Aorta (tissue), 5 donors: ENCODE measurements at regions of chr12 and their contacts with region 1.

Region 1: DNA sequence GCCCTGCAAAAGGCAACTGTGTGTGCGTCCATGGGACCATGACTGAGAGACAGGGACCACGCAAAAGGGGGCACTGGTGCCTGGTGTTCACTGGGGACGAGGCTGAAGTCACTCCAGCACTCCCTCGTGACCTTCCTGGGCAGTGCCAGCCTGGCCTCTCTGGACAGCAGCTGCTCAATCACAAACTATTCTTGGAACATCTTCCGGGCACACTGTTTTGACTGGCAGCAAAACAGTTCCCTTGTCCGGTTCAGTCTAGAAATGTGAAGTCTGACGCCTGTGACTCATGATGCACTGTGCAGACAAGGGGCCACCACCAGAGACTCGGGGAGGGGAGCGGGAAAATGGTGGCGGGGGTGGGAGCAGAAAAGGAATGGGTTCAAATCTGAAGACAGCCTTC is 20.8 kb downstream of the SNRNP35 start:
- DNase-seq: peak; percentile 87 to 90
- ATAC-seq: peak; percentile 89
- H3K4me3 ChIP-seq: no peak overlapping the region
- H3K27ac ChIP-seq: peak overlapping the region; percentile 86 to 87
- H3K4me1 ChIP-seq: peaks cover 0 to 6% of the 10 kb centered on the region in 2 donors
- H3K27me3 ChIP-seq: no peaks in the 10 kb centered on the region

Region 2: GRCh38 chr12:123389560-123390351 is 89.0 kb before region 1 on chr12:
- intact Hi-C with region 1: loop called in 1 of 2 experiments (anchors 10 kb)
- DNase-seq: peak; percentile 65 to 83
- ATAC-seq: peak; percentile 59
- H3K4me3 ChIP-seq: peak overlapping the region; percentile 96 to 97
- H3K27ac ChIP-seq: peak overlapping the region; percentile 49 to 94
- H3K4me1 ChIP-seq: no peaks in the 10 kb centered on the region
- H3K27me3 ChIP-seq: no peaks in the 10 kb centered on the region

Region 3: GRCh38 chr12:123436017-123436964 is 42.5 kb before region 1 on chr12 and contains the start of gene RILPL2:
- intact Hi-C with region 1: loop called in 1 of 2 experiments (anchors 2 kb)
- DNase-seq: peak; percentile 97
- ATAC-seq: peak; percentile 96
- H3K4me3 ChIP-seq: peak within 1 kb of the TSS; percentile 74 to 87
- H3K27ac ChIP-seq: peak within 1 kb of the TSS; percentile 20 to 71
- H3K4me1 ChIP-seq: peaks cover 0 to 4% of the 10 kb centered on the region in 2 donors
- H3K27me3 ChIP-seq: no peaks in the 10 kb centered on the region
- total RNA-seq, gene RILPL2: 12.6 to 13.7 TPM

Region 4: DNA sequence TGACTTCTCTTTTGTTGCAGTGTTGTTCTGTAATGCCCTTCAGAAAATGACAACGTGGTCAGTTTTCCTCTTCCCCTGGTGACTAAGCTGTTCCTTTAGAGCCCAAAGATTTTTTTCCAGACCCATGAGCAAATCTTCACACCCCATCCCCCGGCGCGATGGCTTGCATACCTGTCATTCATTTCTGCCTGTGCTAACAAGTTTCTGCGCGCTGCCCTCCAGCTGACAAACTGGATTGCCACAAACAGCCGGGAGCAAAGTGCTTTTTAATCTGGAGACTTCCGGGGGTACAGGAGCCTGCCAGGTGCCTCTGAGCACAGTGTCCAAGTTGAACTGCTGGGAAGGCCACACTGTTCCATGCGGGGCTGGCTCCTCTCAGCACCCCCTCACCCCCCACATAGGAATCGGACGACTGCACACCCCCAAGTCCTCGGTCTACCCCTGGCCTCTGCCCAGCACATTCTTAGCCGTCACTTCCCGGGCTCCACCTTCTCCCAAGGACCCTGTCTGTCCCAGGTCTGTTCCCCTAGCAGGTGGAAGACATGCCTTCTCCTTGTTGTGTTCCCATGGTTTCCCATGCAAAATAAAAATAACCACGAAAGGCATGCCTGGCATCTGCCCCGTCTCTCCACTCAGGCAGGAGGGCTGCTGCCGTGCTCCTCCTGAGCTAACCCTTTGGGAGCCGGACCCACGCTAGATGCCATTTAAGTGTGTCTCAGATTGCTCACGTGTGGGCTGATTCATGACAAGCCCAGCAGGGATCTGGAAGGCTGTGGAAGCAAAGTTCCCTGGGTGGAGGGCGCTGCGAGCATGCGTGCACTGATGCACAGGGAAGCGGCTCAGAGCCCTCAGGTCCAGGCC is 40.6 kb after region 1 on chr12:
- intact Hi-C with region 1: loop called (anchors 2 to 5 kb)
- DNase-seq: peak; percentile 82 to 89
- ATAC-seq: peak; percentile 70
- H3K4me3 ChIP-seq: no peak overlapping the region
- H3K27ac ChIP-seq: peak overlapping the region; percentile 17 to 93
- H3K4me1 ChIP-seq: no peaks in the 10 kb centered on the region
- H3K27me3 ChIP-seq: no peaks in the 10 kb centered on the region